ENCODE measurements at regions of chr11 and their contacts with region 1.

Region 1: DNA sequence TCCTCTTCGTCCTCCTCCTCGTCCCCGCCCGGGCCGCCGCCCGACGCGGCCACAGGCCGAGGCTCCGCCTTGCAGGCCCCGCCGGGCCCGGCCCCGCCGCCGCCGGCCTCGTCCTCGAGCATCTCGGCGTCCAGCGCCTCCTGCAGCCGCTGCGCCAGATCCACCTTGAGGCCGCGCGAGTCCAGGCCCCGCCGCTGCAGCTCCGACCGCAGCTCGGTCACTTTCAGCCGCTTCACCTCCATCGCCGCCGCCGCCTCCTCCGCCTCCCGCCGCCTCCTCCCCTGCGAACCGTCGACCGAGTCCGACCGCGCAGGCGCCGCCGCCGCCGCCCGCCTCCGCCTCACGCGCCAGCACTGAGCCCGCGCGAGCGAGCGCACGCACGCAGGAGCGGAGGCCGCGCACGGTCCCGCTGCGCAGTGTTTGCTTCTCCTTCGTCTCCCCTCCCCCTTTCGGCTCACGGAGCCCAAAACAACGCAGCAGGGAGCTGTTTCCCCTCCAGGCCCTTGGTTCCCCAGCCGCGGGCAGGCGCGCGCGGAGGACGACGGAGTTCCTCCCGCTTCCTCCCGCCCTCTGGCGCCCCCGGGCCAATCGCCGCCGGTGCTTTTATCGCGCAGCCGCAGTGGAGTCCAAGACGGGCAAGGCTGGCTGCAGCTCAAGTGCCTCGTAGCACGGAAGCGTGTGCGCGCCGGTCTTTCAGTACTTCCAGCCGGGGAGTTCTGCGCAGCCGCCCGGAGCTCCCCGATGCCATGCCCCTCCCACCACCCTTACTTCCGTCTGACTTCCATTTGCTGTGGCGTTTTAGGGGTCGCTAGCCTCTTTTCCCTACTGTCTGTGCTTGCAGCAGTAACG is at the start of gene HNRNPUL2:
- DNase-seq: peak; percentile 98 to 99
- H3K4me3 ChIP-seq: peak within 1 kb of the TSS; percentile 84
- H3K27ac ChIP-seq: peak within 1 kb of the TSS; percentile 76
- H3K4me1 ChIP-seq: peaks cover 26% of the 10 kb centered on the region
- H3K27me3 ChIP-seq: no peaks in the 10 kb centered on the region
- CTCF ChIP-seq: no peak
- total RNA-seq, gene HNRNPUL2: 55.2 and 76.9 TPM in 2 replicates

Region 2: GRCh38 chr11:62591448-62592145 is 135.5 kb before region 1 on chr11 and contains the start of gene TUT1:
- CTCF ChIA-PET with region 1: no interaction called
- POLR2A ChIA-PET with region 1: interaction called, 12 read pairs
- intact Hi-C with region 1: loop called (anchors 5 kb)
- DNase-seq: peak; percentile 98 to 100
- H3K4me3 ChIP-seq: peak within 1 kb of the TSS; percentile 84
- H3K27ac ChIP-seq: peak within 1 kb of the TSS; percentile 61
- H3K4me1 ChIP-seq: peaks cover 29% of the 10 kb centered on the region
- H3K27me3 ChIP-seq: no peaks in the 10 kb centered on the region
- CTCF ChIP-seq: no peak
- total RNA-seq, gene TUT1: 39.3 and 40.5 TPM in 2 replicates

Region 3: DNA sequence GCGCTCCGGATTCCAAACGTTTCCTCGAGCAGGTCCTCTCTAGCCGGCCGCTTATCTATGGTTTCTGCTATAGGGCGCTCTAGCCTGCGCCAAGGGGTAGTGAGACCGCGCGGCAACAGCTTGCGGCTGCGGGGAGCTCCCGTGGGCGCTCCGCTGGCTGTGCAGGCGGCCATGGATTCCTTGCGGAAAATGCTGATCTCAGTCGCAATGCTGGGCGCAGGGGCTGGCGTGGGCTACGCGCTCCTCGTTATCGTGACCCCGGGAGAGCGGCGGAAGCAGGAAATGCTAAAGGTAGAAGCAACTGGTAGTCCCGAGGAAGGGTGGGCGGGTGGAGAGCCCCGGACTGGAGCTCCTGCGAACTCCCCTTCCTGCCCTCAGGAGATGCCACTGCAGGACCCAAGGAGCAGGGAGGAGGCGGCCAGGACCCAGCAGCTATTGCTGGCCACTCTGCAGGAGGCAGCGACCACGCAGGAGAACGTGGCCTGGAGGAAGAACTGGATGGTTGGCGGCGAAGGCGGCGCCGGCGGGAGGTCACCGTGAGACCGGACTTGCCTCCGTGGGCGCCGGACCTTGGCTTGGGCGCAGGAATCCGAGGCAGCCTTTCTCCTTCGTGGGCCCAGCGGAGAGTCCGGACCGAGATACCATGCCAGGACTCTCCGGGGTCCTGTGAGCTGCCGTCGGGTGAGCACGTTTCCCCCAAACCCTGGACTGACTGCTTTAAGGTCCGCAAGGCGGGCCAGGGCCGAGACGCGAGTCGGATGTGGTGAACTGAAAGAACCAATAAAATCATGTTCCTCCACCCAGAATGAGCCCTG is 55.4 kb before region 1 on chr11 and contains the starts of genes LBHD1 and UQCC3:
- CTCF ChIA-PET with region 1: no interaction called
- POLR2A ChIA-PET with region 1: interaction called, 7 read pairs
- intact Hi-C with region 1: loop called (anchors 5 kb)
- DNase-seq: peak; percentile 75 to 80
- H3K4me3 ChIP-seq: peak within 1 kb of the TSS; percentile 79
- H3K27ac ChIP-seq: peak within 1 kb of the TSS; percentile 79
- H3K4me1 ChIP-seq: peaks cover 46% of the 10 kb centered on the region
- H3K27me3 ChIP-seq: no peaks in the 10 kb centered on the region
- CTCF ChIP-seq: no peak
- total RNA-seq, gene LBHD1: 13.2 and 16.1 TPM in 2 replicates
- total RNA-seq, gene UQCC3: 16.1 and 25.4 TPM in 2 replicates

Region 4: GRCh38 chr11:62753736-62754603 is 26.8 kb after region 1 on chr11 and contains the start of gene ZBTB3:
- CTCF ChIA-PET with region 1: interaction called, 9 read pairs
- POLR2A ChIA-PET with region 1: interaction called, 50 read pairs
- intact Hi-C with region 1: no loop called
- DNase-seq: peak; percentile 98
- H3K4me3 ChIP-seq: peak within 1 kb of the TSS; percentile 63
- H3K27ac ChIP-seq: peak within 1 kb of the TSS; percentile 46
- H3K4me1 ChIP-seq: peaks cover 17% of the 10 kb centered on the region
- H3K27me3 ChIP-seq: no peaks in the 10 kb centered on the region
- CTCF ChIP-seq: no peak
- total RNA-seq, gene ZBTB3: 16.5 and 17.2 TPM in 2 replicates

Region 5: DNA sequence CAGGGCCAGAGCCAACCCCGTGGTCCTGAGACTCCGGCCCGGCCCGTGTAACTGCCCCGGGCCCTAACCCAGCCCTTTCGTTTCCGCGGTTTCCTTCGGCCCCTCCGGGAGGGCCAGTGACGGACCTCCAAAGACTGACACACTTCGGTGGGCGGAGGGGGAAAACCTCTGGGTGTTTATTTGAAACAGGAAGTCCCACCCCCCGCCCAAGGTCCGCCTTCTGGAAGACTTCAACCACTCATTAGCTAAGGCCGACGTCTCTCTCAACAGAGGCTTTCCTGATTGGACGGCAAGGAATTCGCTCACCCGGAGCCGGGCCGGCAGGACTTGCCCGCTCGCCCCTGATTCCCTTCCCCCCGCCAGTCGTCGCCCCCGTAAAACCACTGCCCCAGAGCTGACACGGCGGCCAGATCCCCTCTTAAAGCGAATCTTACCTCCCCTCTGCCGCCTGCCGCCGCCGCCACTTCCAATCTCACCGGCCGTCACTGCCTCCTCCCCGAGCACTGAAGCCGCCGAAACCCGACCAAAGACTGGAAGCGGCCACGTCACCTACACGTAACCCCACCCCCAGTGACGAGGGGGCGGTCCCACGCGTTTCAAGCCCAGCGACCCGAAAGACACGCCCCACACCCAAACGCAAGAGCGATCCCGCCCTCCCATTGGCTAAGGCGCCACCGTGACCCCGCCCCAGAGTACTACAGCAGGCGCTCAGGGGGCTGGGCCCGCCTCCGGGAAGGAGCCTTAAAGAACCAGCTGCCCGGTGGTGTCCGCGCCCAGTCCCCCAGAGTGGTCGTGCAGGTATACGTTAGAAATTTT is 104.6 kb after region 1 on chr11 and contains the start of gene STX5:
- CTCF ChIA-PET with region 1: no interaction called
- POLR2A ChIA-PET with region 1: interaction called, 16 read pairs
- intact Hi-C with region 1: no loop called
- DNase-seq: peak; percentile 96 to 99
- H3K4me3 ChIP-seq: peak within 1 kb of the TSS; percentile 100
- H3K27ac ChIP-seq: peak within 1 kb of the TSS; percentile 77
- H3K4me1 ChIP-seq: peaks cover 22% of the 10 kb centered on the region
- H3K27me3 ChIP-seq: no peaks in the 10 kb centered on the region
- CTCF ChIP-seq: no peak
- total RNA-seq, gene STX5: 61.9 and 65.8 TPM in 2 replicates

Region 6: GRCh38 chr11:62880803-62881578 is 153.9 kb after region 1 on chr11 and contains the start of gene SLC3A2:
- CTCF ChIA-PET with region 1: no interaction called
- POLR2A ChIA-PET with region 1: no interaction called
- intact Hi-C with region 1: loop called (anchors 5 kb)
- DNase-seq: peak; percentile 85 to 90
- H3K4me3 ChIP-seq: peak within 1 kb of the TSS; percentile 69
- H3K27ac ChIP-seq: peak within 1 kb of the TSS; percentile 96
- H3K4me1 ChIP-seq: peaks cover 48% of the 10 kb centered on the region
- H3K27me3 ChIP-seq: no peaks in the 10 kb centered on the region
- CTCF ChIP-seq: peak; percentile 68
- total RNA-seq, gene SLC3A2: 513 and 619 TPM in 2 replicates